OCI-LY7 (cell line): ENCODE measurements at regions of chr4 and their contacts with region 1.

Region 1: DNA sequence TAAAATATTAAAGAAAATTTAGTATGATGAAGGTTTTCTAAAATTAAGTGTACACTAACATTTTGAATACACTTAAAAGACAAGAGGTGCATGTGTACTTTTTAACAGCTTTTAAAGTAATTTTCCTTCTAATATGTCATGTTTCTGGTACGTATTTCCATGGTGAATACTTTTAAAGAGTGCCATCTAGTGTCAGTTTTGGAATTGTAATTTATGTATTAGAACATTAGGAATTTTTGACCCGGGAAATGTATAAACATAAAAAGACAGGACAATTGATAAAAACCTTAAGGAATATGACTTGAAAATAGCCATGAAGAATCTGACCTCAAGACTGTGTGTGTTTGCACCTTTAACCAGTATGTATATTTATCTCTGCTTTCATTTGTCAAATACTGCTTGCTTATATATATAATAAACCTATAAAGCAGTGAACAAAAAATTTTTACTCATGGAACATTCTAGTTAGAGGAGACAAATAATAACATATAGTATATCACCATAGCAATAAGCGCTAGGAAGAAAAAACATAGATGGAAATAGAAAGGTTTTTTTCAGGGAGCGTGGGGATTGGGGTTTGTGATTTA is 7.2 kb downstream of the GSTCD start:
- DNase-seq: peak; percentile 45
- H3K4me3 ChIP-seq: no peak overlapping the region
- H3K27ac ChIP-seq: no peak overlapping the region
- H3K4me1 ChIP-seq: peaks cover 14% of the 10 kb centered on the region
- CTCF ChIP-seq: peak; percentile 90

Region 2: DNA sequence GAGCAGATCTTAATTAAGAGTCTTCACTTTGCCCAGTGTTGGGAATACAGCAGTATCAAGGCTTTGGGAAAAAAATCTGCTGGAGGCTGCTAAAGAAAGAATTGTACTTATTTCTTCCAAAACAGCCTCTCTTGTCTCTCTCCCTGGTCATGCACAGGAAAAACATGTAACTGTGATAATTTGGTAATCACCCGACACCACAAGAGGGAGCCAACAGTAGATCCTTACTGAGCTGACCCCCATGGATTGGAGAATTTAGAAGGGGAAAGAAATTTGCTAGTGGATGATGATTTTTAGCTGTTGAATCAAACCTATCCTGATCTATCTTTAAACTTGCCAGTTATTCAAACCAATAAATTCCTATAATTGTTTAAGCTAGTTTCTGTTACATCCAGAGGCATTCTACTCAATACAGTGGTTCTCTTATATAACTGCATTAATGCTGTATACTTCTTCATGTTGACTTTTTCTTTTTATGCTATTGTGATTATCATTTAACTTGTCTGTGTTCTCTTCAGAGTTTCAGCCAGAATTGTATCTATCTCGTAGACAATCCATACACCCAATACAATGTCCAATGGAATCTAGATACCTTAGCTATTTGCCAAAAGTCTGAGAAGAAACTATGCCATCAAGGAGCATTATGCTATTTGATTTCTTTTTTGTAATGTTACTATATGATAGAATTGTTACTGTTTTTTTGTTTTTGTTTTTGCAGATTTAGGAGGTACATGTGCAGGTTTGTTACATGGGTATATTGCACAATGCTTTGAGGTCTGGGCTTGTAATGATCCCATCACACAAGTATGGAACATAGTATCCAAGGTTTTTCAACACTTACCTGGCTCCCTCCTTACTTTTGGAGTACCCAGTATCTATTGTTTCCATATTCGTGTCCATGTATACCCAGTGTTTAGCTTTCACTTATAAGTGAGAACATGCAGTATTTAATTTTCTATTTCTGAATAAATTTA is 194.7 kb before region 1 on chr4:
- CTCF ChIA-PET with region 1: no interaction called
- POLR2A ChIA-PET with region 1: interaction called, 3 read pairs
- intact Hi-C with region 1: loop called (anchors 2 kb)
- DNase-seq: peak; percentile 39
- H3K4me3 ChIP-seq: no peak overlapping the region
- H3K27ac ChIP-seq: no peak overlapping the region
- H3K4me1 ChIP-seq: no peaks in the 10 kb centered on the region
- CTCF ChIP-seq: peak; percentile 85

Region 3: DNA sequence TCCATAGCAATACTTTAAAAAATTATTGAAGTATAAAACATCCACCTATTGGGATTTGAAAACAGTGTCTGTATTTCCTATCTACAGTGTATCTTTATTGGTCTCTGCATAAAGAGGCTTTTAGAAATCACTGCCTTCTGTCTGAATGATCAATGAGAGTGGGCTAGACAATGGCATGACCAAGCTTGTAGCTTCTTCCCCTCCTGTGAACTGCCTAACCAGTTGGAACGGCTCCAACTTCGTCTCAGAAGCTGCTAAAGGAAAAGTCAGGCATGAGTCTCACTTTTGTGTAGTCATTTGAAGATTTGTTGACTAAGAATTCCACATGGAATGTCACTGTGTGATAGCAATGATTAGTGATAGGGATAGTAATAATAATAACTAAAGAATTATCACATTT is 71.5 kb before region 1 on chr4:
- CTCF ChIA-PET with region 1: no interaction called
- POLR2A ChIA-PET with region 1: no interaction called
- intact Hi-C with region 1: no loop called
- DNase-seq: no peak
- H3K4me3 ChIP-seq: no peak overlapping the region
- H3K27ac ChIP-seq: no peak overlapping the region
- H3K4me1 ChIP-seq: no peaks in the 10 kb centered on the region
- CTCF ChIP-seq: no peak

Region 4: DNA sequence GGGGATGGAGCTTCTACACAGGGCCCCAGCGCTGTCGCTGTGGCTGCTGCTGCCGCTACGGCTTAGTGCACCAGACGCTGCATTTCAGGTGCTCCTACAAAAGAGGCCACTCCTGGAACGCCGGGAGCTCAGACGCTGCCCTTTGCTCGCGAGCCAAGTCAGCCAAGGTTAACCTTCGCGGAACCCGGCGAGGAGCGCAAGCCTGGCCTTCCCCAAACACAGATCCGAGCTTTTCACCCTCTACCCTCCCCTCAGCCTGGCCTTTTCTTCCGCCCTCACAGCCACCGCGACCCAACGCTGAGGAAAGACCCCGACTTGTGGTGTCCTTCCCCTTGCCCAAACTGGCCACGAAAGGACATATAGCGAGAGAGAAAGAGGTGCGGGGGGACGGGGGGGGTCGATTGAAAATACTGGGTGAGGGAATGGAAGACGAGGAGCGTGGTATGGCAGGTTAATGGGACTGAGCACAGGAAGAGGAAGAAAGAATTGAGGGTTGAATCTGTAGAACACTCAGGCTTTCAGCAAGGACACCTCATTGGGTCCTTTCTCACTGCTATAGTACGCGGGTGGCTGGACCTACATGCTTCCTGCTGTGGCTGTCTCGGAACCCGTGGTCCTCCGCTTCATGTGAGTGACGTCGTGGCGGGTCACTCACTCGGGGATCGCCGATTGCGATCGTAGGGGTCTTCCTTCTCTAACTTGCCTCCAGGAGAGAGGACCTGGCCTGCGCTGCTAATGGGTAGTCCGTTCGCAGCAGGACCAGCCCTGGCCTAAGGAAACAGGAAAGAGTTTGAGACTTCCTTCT is 600.4 kb after region 1 on chr4 and contains the starts of genes AIMP1 and TBCK:
- CTCF ChIA-PET with region 1: no interaction called
- POLR2A ChIA-PET with region 1: no interaction called
- intact Hi-C with region 1: loop called (anchors 10 kb)
- DNase-seq: peak; percentile 92
- H3K4me3 ChIP-seq: peak within 1 kb of the TSS; percentile 92
- H3K27ac ChIP-seq: peak within 1 kb of the TSS; percentile 75
- H3K4me1 ChIP-seq: peaks cover 24% of the 10 kb centered on the region
- CTCF ChIP-seq: no peak
- total RNA-seq, gene AIMP1: 17.4 and 26.7 TPM in 2 replicates
- total RNA-seq, gene TBCK: 30.2 and 46.5 TPM in 2 replicates